MCF 10A (cell line): ENCODE measurements at regions of chr13 and their contacts with region 1.

Region 1: DNA sequence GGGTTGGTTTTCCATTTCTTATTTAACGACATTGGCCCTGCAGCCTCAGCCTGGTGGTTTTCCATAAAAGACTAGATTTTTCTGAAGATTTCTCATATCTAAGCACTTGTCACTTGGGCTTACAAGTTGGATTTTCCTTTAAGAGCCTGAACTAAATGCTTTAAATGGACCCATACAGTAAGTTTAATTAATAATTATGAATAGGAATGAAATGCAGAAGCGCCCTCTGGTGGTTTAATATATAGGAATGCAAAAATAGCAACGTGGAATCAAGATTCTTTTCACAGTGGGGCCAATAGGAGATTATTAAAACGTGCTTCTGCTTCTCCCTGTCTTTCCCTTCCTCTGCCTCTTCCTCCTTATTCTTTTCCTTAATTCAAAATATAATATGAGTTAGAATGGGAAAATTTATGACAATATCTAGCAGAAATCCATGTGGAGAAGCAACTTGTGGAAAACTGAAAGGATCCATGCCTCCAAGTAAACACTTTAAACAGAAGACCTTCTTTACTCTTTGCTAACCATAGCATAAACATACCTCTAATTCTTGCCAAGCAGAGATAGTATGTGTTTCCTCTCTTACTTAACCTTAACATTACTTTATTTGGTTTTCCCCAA is 324.0 kb downstream of the GPC5 start:
- DNase-seq: peak; percentile 56
- H3K4me3 Mint-ChIP-seq: no peak overlapping the region
- H3K27ac Mint-ChIP-seq: no peak overlapping the region
- H3K4me1 Mint-ChIP-seq: no peaks in the 10 kb centered on the region
- H3K27me3 Mint-ChIP-seq: peaks cover 31% of the 10 kb centered on the region
- CTCF ChIP-seq: peak; percentile 35

Region 2: GRCh38 chr13:91133941-91134802 is 588.2 kb before region 1 on chr13:
- CTCF ChIA-PET with region 1: interaction called, 3 read pairs
- POLR2A ChIA-PET with region 1: no interaction called
- intact Hi-C with region 1: loop called (anchors 10 kb)
- DNase-seq: peak; percentile 86
- H3K4me3 Mint-ChIP-seq: no peak overlapping the region
- H3K27ac Mint-ChIP-seq: no peak overlapping the region
- H3K4me1 Mint-ChIP-seq: no peaks in the 10 kb centered on the region
- H3K27me3 Mint-ChIP-seq: peaks cover 97% of the 10 kb centered on the region
- CTCF ChIP-seq: peak; percentile 71

Region 3: GRCh38 chr13:91313103-91313502 is 409.3 kb before region 1 on chr13:
- CTCF ChIA-PET with region 1: no interaction called
- POLR2A ChIA-PET with region 1: no interaction called
- intact Hi-C with region 1: loop called (anchors 2 kb)
- DNase-seq: peak; percentile 30
- H3K4me3 Mint-ChIP-seq: no peak overlapping the region
- H3K27ac Mint-ChIP-seq: no peak overlapping the region
- H3K4me1 Mint-ChIP-seq: no peaks in the 10 kb centered on the region
- H3K27me3 Mint-ChIP-seq: peaks cover 82% of the 10 kb centered on the region
- CTCF ChIP-seq: peak; percentile 18

Region 4: GRCh38 chr13:91375116-91375729 is 347.2 kb before region 1 on chr13:
- CTCF ChIA-PET with region 1: interaction called, 102 read pairs
- POLR2A ChIA-PET with region 1: no interaction called
- intact Hi-C with region 1: loop called (anchors 1 kb)
- DNase-seq: peak; percentile 33
- H3K4me3 Mint-ChIP-seq: no peak overlapping the region
- H3K27ac Mint-ChIP-seq: no peak overlapping the region
- H3K4me1 Mint-ChIP-seq: no peaks in the 10 kb centered on the region
- H3K27me3 Mint-ChIP-seq: no peaks in the 10 kb centered on the region
- CTCF ChIP-seq: peak; percentile 46

Region 5: DNA sequence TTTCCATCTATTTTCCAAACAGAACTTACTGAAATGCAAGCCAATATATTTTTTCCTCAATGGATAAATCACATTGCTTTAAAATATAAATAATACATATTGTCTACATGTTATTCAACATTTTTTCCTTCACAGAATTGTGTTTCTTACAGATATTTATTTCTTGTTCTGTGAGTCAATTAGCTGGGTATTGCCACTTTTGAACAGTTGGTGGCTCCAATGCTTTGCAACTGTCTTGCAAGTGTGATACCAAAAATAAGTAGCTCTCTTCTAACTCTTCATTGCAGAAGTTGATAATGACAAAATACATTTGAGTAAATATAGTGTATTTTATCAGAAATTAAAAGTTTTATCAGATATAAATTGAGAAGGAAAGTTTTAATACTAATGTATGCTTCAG is 341.0 kb before region 1 on chr13:
- CTCF ChIA-PET with region 1: interaction called, 102 read pairs
- POLR2A ChIA-PET with region 1: interaction called, 3 read pairs
- intact Hi-C with region 1: loop called (anchors 1 kb)
- DNase-seq: no peak
- H3K4me3 Mint-ChIP-seq: no peak overlapping the region
- H3K27ac Mint-ChIP-seq: no peak overlapping the region
- H3K4me1 Mint-ChIP-seq: no peaks in the 10 kb centered on the region
- H3K27me3 Mint-ChIP-seq: peaks cover 34% of the 10 kb centered on the region
- CTCF ChIP-seq: peak; percentile 47

Region 6: DNA sequence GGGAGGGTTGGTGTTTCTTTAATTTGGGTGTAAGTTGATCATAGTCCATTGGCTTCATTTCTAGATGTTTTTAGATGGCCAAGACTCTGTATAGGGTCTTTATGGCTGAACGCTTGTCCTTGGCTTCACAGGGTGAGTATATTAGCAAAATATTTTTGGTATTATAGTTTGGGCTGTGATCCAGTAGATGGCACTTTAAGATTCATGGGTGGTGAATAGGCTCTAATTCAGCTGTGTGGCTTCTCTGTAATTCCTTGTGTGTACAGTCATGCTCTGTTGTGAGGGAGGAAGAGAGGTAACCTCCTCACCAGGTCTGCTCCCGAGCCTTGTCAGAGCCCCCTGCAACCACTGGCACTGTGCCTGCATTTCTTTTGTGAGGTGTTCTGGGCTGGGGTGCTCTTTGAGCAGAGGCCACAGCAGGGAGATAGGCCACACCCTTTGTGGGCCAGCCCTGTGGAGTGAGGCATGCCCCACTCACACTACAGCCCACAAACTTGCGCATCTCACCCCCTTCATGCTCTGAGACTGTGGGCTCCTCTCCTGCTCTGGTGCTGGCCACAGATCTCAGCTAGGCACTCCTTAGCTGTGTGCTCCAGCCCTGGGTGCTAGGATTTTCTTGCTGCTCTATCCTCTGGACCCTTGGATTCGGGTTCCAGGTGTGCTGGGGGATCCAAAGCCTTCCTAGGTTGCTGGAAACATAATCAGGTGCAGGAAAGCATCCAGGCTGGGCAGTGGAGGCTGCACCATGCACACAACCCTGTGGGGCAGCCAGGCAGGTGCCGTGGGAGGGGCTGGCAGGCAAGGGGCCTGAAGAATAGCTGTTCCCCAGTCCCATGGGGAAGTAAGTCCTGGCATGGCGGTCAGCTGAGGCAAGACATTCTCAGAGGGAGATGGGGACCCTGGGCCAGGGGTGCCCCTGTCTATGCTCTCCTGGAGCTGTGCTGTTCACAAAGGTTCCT is 130.0 kb before region 1 on chr13:
- CTCF ChIA-PET with region 1: no interaction called
- POLR2A ChIA-PET with region 1: no interaction called
- intact Hi-C with region 1: loop called (anchors 5 kb)
- DNase-seq: no peak
- H3K4me3 Mint-ChIP-seq: no peak overlapping the region
- H3K27ac Mint-ChIP-seq: no peak overlapping the region
- H3K4me1 Mint-ChIP-seq: no peaks in the 10 kb centered on the region
- H3K27me3 Mint-ChIP-seq: peaks cover 45% of the 10 kb centered on the region
- CTCF ChIP-seq: no peak

Region 7: DNA sequence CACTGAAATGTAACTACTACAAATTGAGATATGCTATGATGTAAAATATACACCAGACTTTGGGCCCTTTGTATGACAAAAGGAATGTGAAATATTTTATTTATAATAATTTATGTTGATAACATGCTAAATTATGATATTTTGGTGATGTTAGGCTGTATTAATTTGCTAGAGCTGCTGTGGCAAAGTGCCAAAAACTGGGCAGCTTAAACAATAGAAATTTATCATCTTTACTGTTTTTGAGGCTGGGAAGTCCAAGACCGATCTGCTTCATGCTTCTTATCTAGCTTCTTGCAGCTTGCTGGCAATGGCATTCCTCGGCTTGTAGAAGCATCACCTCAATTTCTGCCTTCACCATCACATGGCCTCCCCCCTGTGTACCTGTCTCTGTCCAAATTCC is 79.0 kb before region 1 on chr13:
- CTCF ChIA-PET with region 1: no interaction called
- POLR2A ChIA-PET with region 1: no interaction called
- intact Hi-C with region 1: no loop called
- DNase-seq: no peak
- H3K4me3 Mint-ChIP-seq: no peak overlapping the region
- H3K27ac Mint-ChIP-seq: no peak overlapping the region
- H3K4me1 Mint-ChIP-seq: peaks cover 19% of the 10 kb centered on the region
- H3K27me3 Mint-ChIP-seq: no peaks in the 10 kb centered on the region
- CTCF ChIP-seq: no peak